PC-3 (cell line): ENCODE measurements at regions of chr13 and their contacts with region 1.

Region 1: GRCh38 chr13:107867701-107868661 is 347.4 kb downstream of the LIG4 start:
- DNase-seq: peak; percentile 61
- ATAC-seq: peak; percentile 52
- H3K4me3 ChIP-seq: peak overlapping the region; percentile 97
- H3K27ac ChIP-seq: no peak overlapping the region
- H3K4me1 ChIP-seq: peaks cover 17% of the 10 kb centered on the region; the same call in 1 of the 2 replicates
- H3K27me3 ChIP-seq: no peaks in the 10 kb centered on the region
- CTCF ChIP-seq: peak; percentile 84

Region 2: DNA sequence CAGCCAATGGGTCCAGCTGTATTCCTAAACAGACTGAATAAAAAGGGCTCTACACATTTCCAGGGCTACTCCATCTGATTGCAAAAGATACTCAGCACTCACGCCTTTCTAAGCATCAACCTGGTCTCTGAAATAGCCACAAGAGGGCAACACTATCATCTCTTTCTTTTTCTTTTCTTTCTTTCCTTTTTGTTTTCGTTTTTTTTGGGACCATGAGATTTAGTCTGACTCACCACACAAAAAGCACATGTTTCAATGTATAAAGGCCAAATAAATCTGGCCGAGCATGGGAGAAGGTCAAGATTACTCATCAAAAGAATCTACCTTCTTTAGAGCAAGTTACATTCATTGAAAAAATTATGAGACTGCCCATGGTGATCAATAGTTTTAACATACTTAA is 494.4 kb before region 1 on chr13:
- CTCF ChIA-PET with region 1: no interaction called
- POLR2A ChIA-PET with region 1: no interaction called
- intact Hi-C with region 1: loop called (anchors 1 kb)
- DNase-seq: peak; percentile 75
- ATAC-seq: peak; percentile 76
- H3K4me3 ChIP-seq: no peak overlapping the region
- H3K27ac ChIP-seq: no peak overlapping the region
- H3K4me1 ChIP-seq: peaks cover 21% of the 10 kb centered on the region; the same call in 1 of the 2 replicates
- H3K27me3 ChIP-seq: no peaks in the 10 kb centered on the region
- CTCF ChIP-seq: peak; percentile 76

Region 3: GRCh38 chr13:107441279-107441678 is 426.7 kb before region 1 on chr13:
- CTCF ChIA-PET with region 1: no interaction called
- POLR2A ChIA-PET with region 1: no interaction called
- intact Hi-C with region 1: no loop called
- DNase-seq: peak; percentile 25
- ATAC-seq: peak; percentile 38; the same call in 1 of the 2 replicates
- H3K4me3 ChIP-seq: no peak overlapping the region
- H3K27ac ChIP-seq: no peak overlapping the region
- H3K4me1 ChIP-seq: no peaks in the 10 kb centered on the region
- H3K27me3 ChIP-seq: no peaks in the 10 kb centered on the region
- CTCF ChIP-seq: no peak

Region 4: GRCh38 chr13:107518298-107518697 is 349.7 kb before region 1 on chr13:
- CTCF ChIA-PET with region 1: no interaction called
- POLR2A ChIA-PET with region 1: no interaction called
- intact Hi-C with region 1: no loop called
- DNase-seq: peak; percentile 31
- ATAC-seq: no peak
- H3K4me3 ChIP-seq: no peak overlapping the region
- H3K27ac ChIP-seq: no peak overlapping the region
- H3K4me1 ChIP-seq: no peaks in the 10 kb centered on the region
- H3K27me3 ChIP-seq: no peaks in the 10 kb centered on the region
- CTCF ChIP-seq: no peak

Region 5: GRCh38 chr13:107743983-107744382 is 124.0 kb before region 1 on chr13:
- CTCF ChIA-PET with region 1: no interaction called
- POLR2A ChIA-PET with region 1: no interaction called
- intact Hi-C with region 1: loop called (anchors 5 kb)
- DNase-seq: peak; percentile 27
- ATAC-seq: peak; percentile 64
- H3K4me3 ChIP-seq: peak overlapping the region; percentile 51; the same call in 1 of the 2 replicates
- H3K27ac ChIP-seq: peak overlapping the region; percentile 68
- H3K4me1 ChIP-seq: peaks cover 31% of the 10 kb centered on the region
- H3K27me3 ChIP-seq: no peaks in the 10 kb centered on the region
- CTCF ChIP-seq: no peak

Region 6: GRCh38 chr13:107817647-107818287 is 50.2 kb before region 1 on chr13:
- CTCF ChIA-PET with region 1: no interaction called
- POLR2A ChIA-PET with region 1: interaction called, 3 read pairs
- intact Hi-C with region 1: loop called (anchors 1 kb)
- DNase-seq: no peak
- ATAC-seq: no peak
- H3K4me3 ChIP-seq: no peak overlapping the region
- H3K27ac ChIP-seq: peak overlapping the region; percentile 91; the same call in 1 of the 2 replicates
- H3K4me1 ChIP-seq: peaks cover 34% of the 10 kb centered on the region
- H3K27me3 ChIP-seq: no peaks in the 10 kb centered on the region
- CTCF ChIP-seq: no peak

Region 7: DNA sequence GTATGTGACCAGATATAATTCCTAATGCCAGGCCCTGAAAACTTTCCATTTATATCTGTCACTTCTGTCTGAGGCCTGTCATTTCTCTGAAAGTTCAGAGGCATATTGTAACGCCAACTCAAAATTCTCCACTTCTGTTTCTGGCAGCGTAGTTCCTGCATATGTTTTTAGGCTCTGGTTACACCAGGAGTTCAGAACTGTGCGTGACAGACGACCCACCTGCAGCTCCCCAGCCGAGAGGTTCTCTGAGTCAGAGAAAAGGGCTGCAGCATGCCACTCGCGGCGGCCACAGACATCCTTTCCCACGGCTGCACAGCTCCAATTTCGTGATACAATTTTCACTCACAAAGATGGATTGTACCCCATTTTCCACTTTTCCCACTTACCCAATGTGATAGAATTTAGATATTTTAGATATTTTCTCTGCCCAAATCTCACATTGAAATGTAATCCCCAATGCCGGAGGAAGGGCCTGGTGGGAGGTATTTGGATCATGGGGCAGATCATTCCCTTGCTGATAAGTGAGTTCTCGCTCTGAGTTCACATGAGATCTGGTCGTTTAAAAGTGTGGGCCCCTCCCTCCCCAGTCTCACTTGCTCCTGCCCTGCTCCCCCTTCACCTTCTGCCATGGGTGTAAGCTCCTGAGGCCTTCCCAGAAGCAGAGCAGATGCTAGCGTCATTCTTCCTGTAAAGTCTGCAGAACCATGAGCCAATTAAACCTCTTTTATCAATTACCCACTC is 39.3 kb after region 1 on chr13:
- CTCF ChIA-PET with region 1: no interaction called
- POLR2A ChIA-PET with region 1: no interaction called
- intact Hi-C with region 1: no loop called
- DNase-seq: no peak
- ATAC-seq: no peak
- H3K4me3 ChIP-seq: no peak overlapping the region
- H3K27ac ChIP-seq: no peak overlapping the region
- H3K4me1 ChIP-seq: no peaks in the 10 kb centered on the region
- H3K27me3 ChIP-seq: no peaks in the 10 kb centered on the region
- CTCF ChIP-seq: no peak

Region 8: GRCh38 chr13:108155185-108156106 is 287.5 kb after region 1 on chr13:
- CTCF ChIA-PET with region 1: interaction called, 6 read pairs
- POLR2A ChIA-PET with region 1: no interaction called
- intact Hi-C with region 1: loop called (anchors 1 kb)
- DNase-seq: peak; percentile 77
- ATAC-seq: peak; percentile 22; the same call in 1 of the 2 replicates
- H3K4me3 ChIP-seq: no peak overlapping the region
- H3K27ac ChIP-seq: no peak overlapping the region
- H3K4me1 ChIP-seq: no peaks in the 10 kb centered on the region; the same call in 1 of the 2 replicates
- H3K27me3 ChIP-seq: no peaks in the 10 kb centered on the region
- CTCF ChIP-seq: peak; percentile 91